Left lung (tissue), 14 donors: ENCODE measurements at regions of chr1 and their contacts with region 1.

Region 1: DNA sequence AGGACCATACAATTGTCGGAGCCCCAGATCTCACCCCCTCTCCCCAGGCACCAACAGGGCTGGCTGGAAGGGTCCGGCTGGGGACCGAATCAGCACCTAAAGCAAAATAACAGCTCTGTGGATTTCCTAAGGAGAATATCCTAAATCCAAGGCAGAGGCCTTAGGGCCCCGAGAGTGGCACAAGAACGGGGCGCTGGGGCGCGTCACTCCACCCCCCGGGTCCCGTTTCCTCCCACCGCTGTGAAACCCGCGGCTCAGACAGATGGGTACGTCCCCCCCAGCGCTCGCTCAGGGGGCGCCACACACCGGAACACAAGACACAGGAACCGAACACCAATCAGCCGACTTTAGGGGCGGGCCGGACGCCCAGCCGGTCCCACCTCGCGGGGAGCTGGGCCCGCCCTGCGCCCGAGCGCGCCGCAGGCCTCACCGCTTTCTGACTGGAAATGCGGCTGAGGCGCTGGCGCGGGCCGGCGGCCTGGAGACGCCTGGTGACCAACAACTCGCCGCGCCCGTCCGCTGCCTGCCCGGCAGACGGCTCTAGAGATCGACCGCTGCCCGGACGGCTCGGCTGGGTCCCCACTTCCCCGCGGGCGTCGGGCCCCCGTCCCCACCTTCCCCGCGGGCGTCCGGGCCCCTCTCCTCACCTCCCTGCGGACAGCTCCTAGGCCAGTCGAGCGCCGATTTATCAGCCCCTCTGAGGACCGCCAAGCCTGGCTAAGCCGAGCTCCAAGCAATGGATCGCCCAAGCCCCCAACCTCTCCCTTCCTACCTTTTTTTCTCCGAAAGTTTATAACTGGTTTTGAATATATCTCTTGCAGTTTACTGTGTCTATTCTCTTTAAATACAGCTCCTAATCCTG is at the start of gene HFM1:
- DNase-seq: peak; percentile 75 to 92 (median 86)
- ATAC-seq: peak; percentile 99
- H3K4me3 ChIP-seq: peak within 1 kb of the TSS; percentile 49 to 52
- H3K27ac ChIP-seq: peak within 1 kb of the TSS; percentile 55 to 79
- H3K4me1 ChIP-seq: peaks cover 0 to 13% of the 10 kb centered on the region in 2 donors
- H3K27me3 ChIP-seq: peaks cover 0 to 25% of the 10 kb centered on the region in 2 donors
- CTCF ChIP-seq: no peak
- polyA plus RNA-seq, gene HFM1: 7.7 to 14.7 (median 10.2) TPM

Region 2: GRCh38 chr1:91173346-91173890 is 231.0 kb before region 1 on chr1:
- intact Hi-C with region 1: loop called in 1 of 2 experiments (anchors 10 kb)
- DNase-seq: peak in 1 of 4 donors; percentile 30
- ATAC-seq: no peak
- H3K4me3 ChIP-seq: no peak overlapping the region
- H3K27ac ChIP-seq: no peak overlapping the region
- H3K4me1 ChIP-seq: no peaks in the 10 kb centered on the region
- H3K27me3 ChIP-seq: peaks cover 0 to 47% of the 10 kb centered on the region in 2 donors
- CTCF ChIP-seq: no peak

Region 3: DNA sequence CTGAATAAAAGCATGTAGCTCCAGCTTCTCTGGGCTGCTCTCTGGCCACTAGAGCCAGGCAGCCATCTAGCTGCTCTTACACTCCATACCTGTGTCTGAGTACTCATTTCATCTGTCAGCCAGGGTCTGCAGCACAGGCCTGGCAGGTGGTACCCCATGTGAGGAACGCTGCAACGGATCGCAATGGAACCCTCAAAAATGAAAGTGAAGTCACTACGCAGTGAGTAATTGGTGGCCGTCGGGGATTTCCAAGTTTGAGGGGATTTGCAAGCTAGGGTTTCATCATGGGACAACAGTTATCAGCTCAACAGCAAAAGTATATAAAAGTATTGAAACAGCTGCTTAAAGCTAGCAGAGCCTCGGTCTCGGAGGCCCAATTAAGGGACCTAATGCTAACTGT is 186.5 kb before region 1 on chr1:
- intact Hi-C with region 1: no loop called
- DNase-seq: no peak
- ATAC-seq: no peak
- H3K4me3 ChIP-seq: no peak overlapping the region
- H3K27ac ChIP-seq: no peak overlapping the region
- H3K4me1 ChIP-seq: no peaks in the 10 kb centered on the region
- H3K27me3 ChIP-seq: no peaks in the 10 kb centered on the region
- CTCF ChIP-seq: no peak